Activated CD4-positive, alpha-beta T cell treated with anti-CD3 and anti-CD28 coated beads for 36 hours (primary cell): ENCODE measurements at regions of chr5 and their contacts with region 1.

Region 1: GRCh38 chr5:159262859-159263567 is at the start of gene UBLCP1:
- DNase-seq: peak; percentile 85
- ATAC-seq: peak; percentile 92
- H3K4me3 Mint-ChIP-seq: peak within 1 kb of the TSS; percentile 89
- H3K27ac Mint-ChIP-seq: peak within 1 kb of the TSS; percentile 100
- H3K4me1 Mint-ChIP-seq: peaks cover 49% of the 10 kb centered on the region
- H3K27me3 Mint-ChIP-seq: no peaks in the 10 kb centered on the region
- total RNA-seq, gene UBLCP1: 26.0 to 31.0 TPM

Region 2: DNA sequence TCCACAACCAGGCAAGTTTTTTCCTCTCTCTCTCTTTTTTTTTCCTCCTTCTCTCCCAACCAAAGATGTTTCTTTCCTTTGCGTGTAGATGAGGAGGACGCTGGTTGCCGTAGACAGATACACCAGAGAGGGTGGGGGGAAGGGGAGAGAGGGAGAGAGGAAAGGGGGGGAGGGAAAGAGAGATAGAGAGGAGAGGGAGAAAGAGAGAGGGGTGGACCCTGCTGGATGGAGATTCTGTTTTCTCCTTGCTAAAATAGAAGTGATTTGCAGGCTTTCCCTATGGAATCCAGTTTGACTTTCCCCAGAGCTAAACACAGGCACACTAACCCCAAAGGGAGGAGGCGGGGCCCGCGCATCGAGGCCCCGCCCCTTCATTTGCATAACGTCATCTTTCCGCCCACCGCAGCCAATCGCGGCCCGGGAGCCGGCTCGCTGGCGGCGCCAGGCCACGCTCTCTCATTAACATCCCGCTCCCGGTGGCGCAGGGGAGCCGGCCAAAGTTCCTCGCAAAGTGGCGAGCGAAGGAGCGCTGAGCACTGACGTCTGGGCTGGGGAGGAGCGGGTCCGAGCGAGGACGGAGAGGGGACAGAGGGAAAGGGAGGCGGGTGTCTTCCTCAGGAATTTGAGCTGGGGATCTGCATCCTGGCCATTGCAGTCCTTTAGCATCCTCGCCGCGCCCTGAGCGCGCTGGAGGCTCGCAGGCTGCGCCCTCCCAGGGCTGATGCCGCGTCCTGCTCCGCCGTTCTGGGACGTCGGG is 162.8 kb before region 1 on chr5:
- CTCF ChIA-PET with region 1: no interaction called
- POLR2A ChIA-PET with region 1: no interaction called
- intact Hi-C with region 1: loop called in 1 of 2 experiments (anchors 1 kb)
- DNase-seq: peak; percentile 91
- ATAC-seq: peak; percentile 87
- H3K4me3 Mint-ChIP-seq: peak overlapping the region; percentile 77
- H3K27ac Mint-ChIP-seq: peak overlapping the region; percentile 53
- H3K4me1 Mint-ChIP-seq: peaks cover 33% of the 10 kb centered on the region
- H3K27me3 Mint-ChIP-seq: peaks cover 56% of the 10 kb centered on the region

Region 3: DNA sequence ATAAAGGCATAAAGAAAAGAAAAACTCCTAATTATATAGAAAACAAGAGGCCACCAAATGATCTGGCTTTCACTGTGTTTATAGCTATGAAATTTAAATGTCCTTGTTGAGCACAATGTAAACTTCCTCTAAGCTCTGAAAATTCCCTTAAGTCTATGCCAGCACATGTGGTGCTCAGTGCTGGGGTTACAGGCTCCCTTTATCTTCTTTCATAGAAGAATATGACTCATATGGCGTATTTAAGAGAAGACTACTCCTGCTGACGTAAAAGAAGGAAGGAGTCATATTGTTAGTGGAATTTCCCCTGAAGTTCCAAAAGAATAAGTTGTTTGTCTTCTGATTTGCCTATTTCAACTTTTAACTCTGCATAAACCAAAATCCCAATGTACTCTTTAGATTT is 84.0 kb before region 1 on chr5:
- CTCF ChIA-PET with region 1: no interaction called
- POLR2A ChIA-PET with region 1: no interaction called
- intact Hi-C with region 1: loop called (anchors 2 to 5 kb)
- DNase-seq: peak; percentile 55
- ATAC-seq: peak; percentile 92
- H3K4me3 Mint-ChIP-seq: peak overlapping the region; percentile 46
- H3K27ac Mint-ChIP-seq: peak overlapping the region; percentile 91
- H3K4me1 Mint-ChIP-seq: peaks cover 87% of the 10 kb centered on the region
- H3K27me3 Mint-ChIP-seq: no peaks in the 10 kb centered on the region

Region 4: GRCh38 chr5:159552751-159553150 is 289.7 kb after region 1 on chr5:
- CTCF ChIA-PET with region 1: no interaction called
- POLR2A ChIA-PET with region 1: no interaction called
- intact Hi-C with region 1: no loop called
- DNase-seq: no peak
- ATAC-seq: no peak
- H3K4me3 Mint-ChIP-seq: no peak overlapping the region
- H3K27ac Mint-ChIP-seq: no peak overlapping the region
- H3K4me1 Mint-ChIP-seq: no peaks in the 10 kb centered on the region
- H3K27me3 Mint-ChIP-seq: peaks cover 4% of the 10 kb centered on the region

Region 5: GRCh38 chr5:160008877-160009590 is 746.0 kb after region 1 on chr5 and contains the start of gene TTC1:
- CTCF ChIA-PET with region 1: no interaction called
- POLR2A ChIA-PET with region 1: no interaction called
- intact Hi-C with region 1: loop called in 1 of 2 experiments (anchors 2 kb)
- DNase-seq: peak; percentile 95
- ATAC-seq: peak; percentile 98
- H3K4me3 Mint-ChIP-seq: peak within 1 kb of the TSS; percentile 92
- H3K27ac Mint-ChIP-seq: peak within 1 kb of the TSS; percentile 96
- H3K4me1 Mint-ChIP-seq: peaks cover 26% of the 10 kb centered on the region
- H3K27me3 Mint-ChIP-seq: no peaks in the 10 kb centered on the region
- total RNA-seq, gene TTC1: 60.6 to 63.1 TPM

Region 6: DNA sequence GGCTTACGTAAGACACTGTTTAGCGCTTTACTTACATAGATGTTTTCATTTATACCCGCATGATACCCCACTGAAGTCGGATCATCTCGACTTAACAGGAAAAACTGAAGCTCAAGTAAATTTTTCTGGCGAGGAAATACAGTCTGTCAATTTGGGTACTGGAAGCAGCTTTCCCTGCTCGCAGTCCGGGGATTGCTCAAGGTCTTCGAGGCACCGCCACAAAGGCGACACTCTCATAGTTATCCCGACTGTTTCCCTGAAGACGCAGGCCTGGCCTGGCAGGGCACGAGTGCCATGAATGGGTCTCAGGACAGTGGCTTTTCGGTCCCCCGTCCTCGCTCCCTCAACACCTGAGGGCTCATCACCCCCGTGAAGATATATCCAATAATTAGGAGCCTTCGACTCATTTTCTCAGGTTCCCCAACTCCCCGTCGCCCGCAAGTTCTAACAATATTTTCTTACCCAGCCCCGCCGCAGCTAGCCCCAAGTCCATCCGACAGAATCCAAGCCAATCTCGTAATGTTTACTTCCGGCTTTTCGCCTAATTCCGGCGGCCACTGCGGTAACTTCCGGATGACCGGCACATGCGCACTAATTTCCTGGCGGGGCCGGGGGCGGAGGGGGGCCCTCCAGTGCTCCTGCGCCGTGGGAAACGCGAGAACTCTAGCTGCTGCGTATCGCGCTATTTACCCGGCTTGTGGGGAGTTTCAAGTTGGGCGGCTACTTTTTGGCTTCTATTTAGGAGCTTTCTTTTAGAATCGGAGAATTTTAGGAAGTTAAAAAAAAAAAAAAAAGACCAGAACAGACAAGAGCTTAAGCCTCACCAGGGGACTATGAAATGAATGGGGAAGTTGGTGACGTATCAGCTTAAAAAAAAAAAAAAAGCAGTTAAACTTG is 1155.8 kb after region 1 on chr5 and contains the start of gene SLU7:
- CTCF ChIA-PET with region 1: no interaction called
- POLR2A ChIA-PET with region 1: no interaction called
- intact Hi-C with region 1: loop called in 1 of 2 experiments (anchors 5 kb)
- DNase-seq: peak; percentile 96
- ATAC-seq: peak; percentile 80
- H3K4me3 Mint-ChIP-seq: peak within 1 kb of the TSS; percentile 96
- H3K27ac Mint-ChIP-seq: peak within 1 kb of the TSS; percentile 99
- H3K4me1 Mint-ChIP-seq: peaks cover 57% of the 10 kb centered on the region
- H3K27me3 Mint-ChIP-seq: no peaks in the 10 kb centered on the region
- total RNA-seq, gene SLU7: 41.1 to 53.0 TPM